Naive thymus-derived CD4-positive, alpha-beta T cell (primary cell): ENCODE measurements at regions of chr10 and their contacts with region 1.

Region 1: GRCh38 chr10:5629303-5630111 is 36.9 kb downstream of the ASB13 start:
- DNase-seq: peak; percentile 63 to 89 (median 82)
- ATAC-seq: peak; percentile 99
- H3K4me3 ChIP-seq: no peak overlapping the region
- H3K4me3 Mint-ChIP-seq: peak overlapping the region in 9 of 10 donors; percentile 28 to 63 (median 53)
- H3K27ac ChIP-seq: no peak overlapping the region
- H3K27ac Mint-ChIP-seq: peak overlapping the region in 3 of 9 donors; percentile 38 to 82 (median 53)
- H3K4me1 ChIP-seq: peaks cover 3 to 10% of the 10 kb centered on the region in 2 donors
- H3K4me1 Mint-ChIP-seq: peaks cover 5 to 22% (median 16%) of the 10 kb centered on the region in 7 donors
- H3K27me3 ChIP-seq: peaks cover 0 to 4% of the 10 kb centered on the region in 2 donors
- H3K27me3 Mint-ChIP-seq: peaks cover 0 to 11% (median 4%) of the 10 kb centered on the region in 5 donors

Region 2: GRCh38 chr10:5666008-5666829 is 36.7 kb after region 1 on chr10 and contains the start of gene ASB13:
- CTCF ChIA-PET with region 1: interaction called, 3 read pairs
- POLR2A ChIA-PET with region 1: no interaction called
- intact Hi-C with region 1: loop called (anchors 5 kb)
- DNase-seq: peak in 8 of 9 donors; percentile 12 to 62 (median 24)
- ATAC-seq: peak; percentile 87
- H3K4me3 ChIP-seq: peak within 1 kb of the TSS; percentile 71
- H3K4me3 Mint-ChIP-seq: peak within 1 kb of the TSS; percentile 91 to 98 (median 95)
- H3K27ac ChIP-seq: peak within 1 kb of the TSS; percentile 62
- H3K27ac Mint-ChIP-seq: peak within 1 kb of the TSS; percentile 35 to 92 (median 84)
- H3K4me1 ChIP-seq: peaks cover 6 to 9% of the 10 kb centered on the region in 2 donors
- H3K4me1 Mint-ChIP-seq: peaks cover 13 to 36% (median 30%) of the 10 kb centered on the region in 7 donors
- H3K27me3 ChIP-seq: no peaks in the 10 kb centered on the region
- H3K27me3 Mint-ChIP-seq: peaks cover 0 to 18% (median 0%) of the 10 kb centered on the region in 5 donors
- total RNA-seq, gene ASB13: 8.0 to 18.3 (median 10.2) TPM

Region 3: GRCh38 chr10:5710859-5711258 is 81.4 kb after region 1 on chr10:
- CTCF ChIA-PET with region 1: interaction called, 3 read pairs
- POLR2A ChIA-PET with region 1: no interaction called
- intact Hi-C with region 1: loop called in 1 of 2 experiments (anchors 1 kb)
- DNase-seq: peak in 1 of 9 donors; percentile 7
- ATAC-seq: no peak
- H3K4me3 ChIP-seq: peak overlapping the region; percentile 32
- H3K4me3 Mint-ChIP-seq: peak overlapping the region; percentile 16 to 84 (median 70)
- H3K27ac ChIP-seq: peak overlapping the region; percentile 20
- H3K27ac Mint-ChIP-seq: peak overlapping the region in 4 of 9 donors; percentile 68 to 89 (median 82)
- H3K4me1 ChIP-seq: peaks cover 11 to 20% of the 10 kb centered on the region in 2 donors
- H3K4me1 Mint-ChIP-seq: peaks cover 31 to 91% (median 79%) of the 10 kb centered on the region in 7 donors
- H3K27me3 ChIP-seq: no peaks in the 10 kb centered on the region
- H3K27me3 Mint-ChIP-seq: no peaks in the 10 kb centered on the region

Region 4: DNA sequence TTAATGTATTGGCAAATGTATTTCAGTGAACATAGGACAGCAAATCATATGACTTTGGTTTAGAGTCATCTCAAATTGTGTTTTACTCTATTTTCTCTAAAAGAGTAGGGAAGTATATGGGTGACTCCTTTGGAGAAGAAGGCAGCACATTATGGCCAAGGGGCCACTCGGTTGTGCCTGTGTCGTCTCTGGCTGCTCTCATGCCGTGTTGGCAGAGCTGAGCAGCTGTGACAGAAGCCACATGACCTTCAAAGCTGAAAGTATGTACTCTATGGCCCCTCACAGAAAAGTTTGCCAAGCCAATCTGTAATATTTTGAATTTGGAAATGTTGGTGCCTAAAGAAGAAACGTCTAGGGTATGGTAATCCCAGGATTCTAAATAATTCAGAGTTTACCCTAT is 102.6 kb after region 1 on chr10:
- CTCF ChIA-PET with region 1: interaction called, 4 read pairs
- POLR2A ChIA-PET with region 1: no interaction called
- intact Hi-C with region 1: loop called in 1 of 2 experiments (anchors 5 kb)
- DNase-seq: no peak
- ATAC-seq: no peak
- H3K4me3 ChIP-seq: no peak overlapping the region
- H3K4me3 Mint-ChIP-seq: no peak overlapping the region
- H3K27ac ChIP-seq: no peak overlapping the region
- H3K27ac Mint-ChIP-seq: peak overlapping the region in 5 of 9 donors; percentile 6 to 48 (median 12)
- H3K4me1 ChIP-seq: no peaks in the 10 kb centered on the region
- H3K4me1 Mint-ChIP-seq: peaks cover 8 to 35% (median 23%) of the 10 kb centered on the region in 7 donors
- H3K27me3 ChIP-seq: no peaks in the 10 kb centered on the region
- H3K27me3 Mint-ChIP-seq: no peaks in the 10 kb centered on the region

Region 5: DNA sequence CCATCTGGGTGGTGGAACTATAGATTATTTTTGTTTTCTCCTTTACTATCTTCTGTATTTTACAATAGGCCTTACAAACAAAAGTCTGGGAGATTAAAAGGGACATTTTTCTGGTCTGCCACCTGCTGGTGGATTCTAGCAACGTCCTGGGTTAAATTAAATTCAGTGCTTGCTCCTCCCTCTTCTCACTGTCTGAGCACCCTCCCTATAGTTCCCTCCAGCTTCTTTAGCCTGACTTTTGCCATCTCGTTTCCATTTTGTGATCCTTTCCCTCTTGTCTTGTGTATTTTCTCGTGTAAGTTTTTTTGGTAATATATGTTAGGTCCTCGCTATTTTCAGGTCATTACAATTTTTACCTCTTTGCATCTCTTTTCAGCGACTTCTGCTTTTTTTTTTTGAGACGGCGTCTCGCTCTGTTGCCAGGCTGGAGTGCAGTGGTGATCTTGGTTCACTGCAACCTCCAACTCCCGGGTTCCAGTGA is 244.0 kb after region 1 on chr10:
- CTCF ChIA-PET with region 1: interaction called, 13 read pairs
- POLR2A ChIA-PET with region 1: interaction called, 5 read pairs
- intact Hi-C with region 1: loop called (anchors 1 kb)
- DNase-seq: peak; percentile 42 to 76 (median 67)
- ATAC-seq: peak; percentile 96
- H3K4me3 ChIP-seq: no peak overlapping the region
- H3K4me3 Mint-ChIP-seq: peak overlapping the region in 8 of 10 donors; percentile 46 to 76 (median 58)
- H3K27ac ChIP-seq: no peak overlapping the region
- H3K27ac Mint-ChIP-seq: peak overlapping the region in 2 of 9 donors; percentile 60 to 74
- H3K4me1 ChIP-seq: no peaks in the 10 kb centered on the region
- H3K4me1 Mint-ChIP-seq: peaks cover 2 to 10% (median 5%) of the 10 kb centered on the region in 7 donors
- H3K27me3 ChIP-seq: no peaks in the 10 kb centered on the region
- H3K27me3 Mint-ChIP-seq: peaks cover 0 to 4% (median 0%) of the 10 kb centered on the region in 5 donors